GM12878 (cell line): ENCODE measurements at regions of chr9 and their contacts with region 1.

Region 1: GRCh38 chr9:37528652-37529510 is 43.1 kb downstream of the POLR1E start:
- DNase-seq: peak; percentile 40
- ATAC-seq: peak; percentile 86
- H3K4me3 ChIP-seq: no peak overlapping the region
- H3K27ac ChIP-seq: peak overlapping the region; percentile 58
- H3K4me1 ChIP-seq: peaks cover 26% of the 10 kb centered on the region
- H3K27me3 ChIP-seq: no peaks in the 10 kb centered on the region
- CTCF ChIP-seq: no peak
- EP300 ChIP-seq: peak in 1 of 2 experiments; percentile 67; a peak in 1 of 4 replicates
- POLR2A ChIP-seq: no peak
- RAD21 ChIP-seq: no peak

Region 2: DNA sequence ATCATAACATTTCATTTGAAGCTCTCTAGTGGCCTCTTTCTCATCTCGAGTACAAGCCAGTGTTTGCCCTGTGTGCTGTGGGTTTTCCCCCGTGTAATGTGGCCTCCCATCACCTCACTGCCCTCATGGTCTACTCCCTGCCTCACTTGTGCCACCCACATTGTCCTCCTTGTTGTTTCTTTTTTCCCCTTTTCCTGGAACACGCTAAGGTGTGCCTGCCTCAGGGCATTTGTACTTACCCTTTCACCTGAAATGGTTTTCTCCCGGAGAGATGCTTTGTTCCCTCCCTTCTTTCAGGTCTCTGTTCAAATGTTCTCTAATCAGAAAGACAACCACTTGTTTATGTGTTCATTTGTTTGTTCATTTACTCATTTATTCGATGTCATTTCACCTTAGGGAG is 915.9 kb before region 1 on chr9:
- CTCF ChIA-PET with region 1: no interaction called
- POLR2A ChIA-PET with region 1: no interaction called
- RAD21 ChIA-PET with region 1: no interaction called
- SMC1A ChIA-PET with region 1: no interaction called
- in situ Hi-C with region 1: no loop called
- intact Hi-C with region 1: no loop called
- DNase-seq: no peak
- ATAC-seq: peak; percentile 43; the same call in 1 of the 3 replicates
- H3K4me3 ChIP-seq: no peak overlapping the region
- H3K27ac ChIP-seq: no peak overlapping the region
- H3K4me1 ChIP-seq: no peaks in the 10 kb centered on the region
- H3K27me3 ChIP-seq: no peaks in the 10 kb centered on the region
- CTCF ChIP-seq: no peak
- EP300 ChIP-seq: no peak
- POLR2A ChIP-seq: no peak
- RAD21 ChIP-seq: no peak

Region 3: DNA sequence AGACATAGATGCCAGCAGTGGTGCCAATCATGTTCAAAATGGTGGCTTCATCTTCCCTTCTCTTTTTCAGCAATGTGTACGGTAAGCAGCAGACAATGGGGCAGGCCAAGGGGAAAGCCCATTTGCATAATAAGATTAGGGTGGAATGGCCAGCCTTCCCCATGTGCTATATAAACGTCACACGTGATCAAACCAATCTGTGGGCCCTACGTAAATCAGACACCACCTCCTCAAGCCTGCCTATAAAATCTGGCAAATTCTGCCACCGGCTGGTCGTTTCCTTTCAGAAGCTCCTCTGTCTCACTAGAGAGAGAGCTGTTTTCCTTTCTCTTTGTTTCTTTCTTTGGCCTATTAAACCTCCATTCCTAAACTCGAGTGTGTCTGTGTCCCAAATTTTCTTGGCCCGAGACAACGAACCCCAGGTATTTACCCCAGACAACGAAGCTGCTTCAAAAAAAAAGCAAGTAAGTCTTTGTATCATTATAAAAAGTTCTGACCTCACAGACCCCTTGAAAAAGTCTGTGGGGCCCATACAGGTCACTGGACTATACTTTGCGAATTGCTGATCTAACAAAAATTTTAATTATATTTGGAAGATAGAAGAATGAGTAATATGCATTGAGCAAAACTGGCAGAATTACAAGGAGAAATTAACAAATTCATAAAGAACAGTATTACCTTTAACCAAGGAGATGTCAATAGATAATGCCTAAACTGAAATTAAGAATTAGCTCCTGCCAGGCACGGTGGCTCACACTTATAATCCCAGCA is 78.8 kb before region 1 on chr9:
- CTCF ChIA-PET with region 1: no interaction called
- POLR2A ChIA-PET with region 1: no interaction called
- RAD21 ChIA-PET with region 1: no interaction called
- SMC1A ChIA-PET with region 1: no interaction called
- in situ Hi-C with region 1: no loop called
- intact Hi-C with region 1: no loop called
- DNase-seq: no peak
- ATAC-seq: no peak
- H3K4me3 ChIP-seq: no peak overlapping the region
- H3K27ac ChIP-seq: no peak overlapping the region
- H3K4me1 ChIP-seq: no peaks in the 10 kb centered on the region; the same call in 1 of the 2 replicates
- H3K27me3 ChIP-seq: no peaks in the 10 kb centered on the region
- CTCF ChIP-seq: no peak
- EP300 ChIP-seq: no peak
- POLR2A ChIP-seq: no peak
- RAD21 ChIP-seq: no peak

Region 4: GRCh38 chr9:37511016-37512010 is 17.6 kb before region 1 on chr9:
- CTCF ChIA-PET with region 1: interaction called, 3 read pairs
- POLR2A ChIA-PET with region 1: no interaction called
- RAD21 ChIA-PET with region 1: no interaction called
- SMC1A ChIA-PET with region 1: no interaction called
- in situ Hi-C with region 1: no loop called
- intact Hi-C with region 1: loop called (anchors 2 kb)
- DNase-seq: no peak
- ATAC-seq: peak; percentile 90
- H3K4me3 ChIP-seq: no peak overlapping the region
- H3K27ac ChIP-seq: no peak overlapping the region
- H3K4me1 ChIP-seq: no peaks in the 10 kb centered on the region
- H3K27me3 ChIP-seq: no peaks in the 10 kb centered on the region
- CTCF ChIP-seq: peak; percentile 26 to 44 (median 35); a peak in 4 of 6 replicates
- EP300 ChIP-seq: no peak
- POLR2A ChIP-seq: peak; percentile 58; the same call in 1 of the 2 replicates
- RAD21 ChIP-seq: 0 out of 2 replicates have a peak, but pooled peaks have one; percentile 27

Region 5: GRCh38 chr9:37565661-37566618 is 37.1 kb after region 1 on chr9:
- CTCF ChIA-PET with region 1: no interaction called
- POLR2A ChIA-PET with region 1: interaction called, 4 read pairs
- RAD21 ChIA-PET with region 1: interaction called, 6 read pairs
- SMC1A ChIA-PET with region 1: interaction called, 4 read pairs
- in situ Hi-C with region 1: no loop called
- intact Hi-C with region 1: loop called (anchors 5 kb)
- DNase-seq: peak; percentile 77
- ATAC-seq: peak; percentile 84
- H3K4me3 ChIP-seq: peak overlapping the region; percentile 57
- H3K27ac ChIP-seq: peak overlapping the region; percentile 95
- H3K4me1 ChIP-seq: peaks cover 53% of the 10 kb centered on the region
- H3K27me3 ChIP-seq: no peaks in the 10 kb centered on the region
- CTCF ChIP-seq: no peak
- EP300 ChIP-seq: no peak
- POLR2A ChIP-seq: peak; percentile 54
- RAD21 ChIP-seq: no peak

Region 6: GRCh38 chr9:37575921-37576721 is 47.2 kb after region 1 on chr9 and contains the start of gene FBXO10:
- CTCF ChIA-PET with region 1: interaction called, 3 read pairs
- POLR2A ChIA-PET with region 1: interaction called, 11 read pairs
- RAD21 ChIA-PET with region 1: no interaction called
- SMC1A ChIA-PET with region 1: interaction called, 7 read pairs
- in situ Hi-C with region 1: no loop called
- intact Hi-C with region 1: no loop called
- DNase-seq: no peak
- ATAC-seq: peak; percentile 87
- H3K4me3 ChIP-seq: peak within 1 kb of the TSS; percentile 89
- H3K27ac ChIP-seq: peak within 1 kb of the TSS; percentile 78
- H3K4me1 ChIP-seq: peaks cover 5% of the 10 kb centered on the region
- H3K27me3 ChIP-seq: no peaks in the 10 kb centered on the region
- CTCF ChIP-seq: no peak
- EP300 ChIP-seq: 0 out of 4 replicates have a peak, but pooled peaks of 1 of the 2 experiments have one; percentile 6
- POLR2A ChIP-seq: peak; percentile 74
- RAD21 ChIP-seq: 0 out of 2 replicates have a peak, but pooled peaks have one; percentile 6
- polyA plus RNA-seq, gene FBXO10: 1.6 to 1.9 TPM

Region 7: DNA sequence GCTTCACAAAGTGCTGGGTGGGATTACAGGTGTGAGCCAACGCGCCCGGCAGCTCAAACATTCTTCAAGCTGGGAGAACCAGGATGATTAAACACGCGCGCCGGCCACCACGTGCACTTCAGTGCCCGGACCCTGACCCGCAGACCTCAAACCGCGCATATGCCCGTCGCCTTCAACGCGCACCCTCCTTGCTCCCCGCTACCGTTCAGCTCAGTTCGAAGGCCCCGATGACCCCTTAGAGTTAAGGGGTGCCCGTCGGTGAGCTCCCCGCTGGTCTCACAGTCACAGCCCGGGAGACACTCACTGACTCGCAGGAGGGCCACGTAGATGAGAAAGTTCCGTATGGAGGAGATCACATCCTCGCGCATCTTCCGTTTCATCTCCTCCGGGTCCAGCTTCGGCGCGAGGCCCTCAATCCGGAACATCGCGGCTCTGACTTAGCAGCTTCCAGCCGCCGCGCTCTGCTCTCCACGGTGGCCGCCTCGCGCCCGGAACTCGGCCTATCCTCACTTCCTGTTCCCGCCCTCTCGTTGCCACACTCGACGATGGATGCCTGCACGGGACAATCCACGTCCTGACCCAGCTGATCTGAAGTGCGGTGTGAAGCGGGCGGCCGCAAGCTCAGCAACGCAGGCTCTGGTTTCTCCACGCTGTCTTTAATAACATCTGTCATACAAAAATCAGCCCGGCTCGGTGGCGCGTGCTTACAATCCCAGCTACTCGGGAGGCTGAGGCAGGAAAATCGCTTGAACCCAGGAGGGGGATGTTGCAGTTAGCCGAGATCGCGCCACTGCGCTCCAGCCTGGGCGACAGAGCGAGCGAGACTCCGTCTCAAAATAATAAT is 63.4 kb after region 1 on chr9 and contains the start of gene TOMM5:
- CTCF ChIA-PET with region 1: interaction called, 3 read pairs
- POLR2A ChIA-PET with region 1: interaction called, 3 read pairs
- RAD21 ChIA-PET with region 1: interaction called, 6 read pairs
- SMC1A ChIA-PET with region 1: interaction called, 3 read pairs
- in situ Hi-C with region 1: no loop called
- intact Hi-C with region 1: loop called (anchors 5 kb)
- DNase-seq: peak; percentile 76
- ATAC-seq: peak; percentile 92
- H3K4me3 ChIP-seq: peak within 1 kb of the TSS; percentile 73
- H3K27ac ChIP-seq: peak within 1 kb of the TSS; percentile 94
- H3K4me1 ChIP-seq: peaks cover 8% of the 10 kb centered on the region
- H3K27me3 ChIP-seq: no peaks in the 10 kb centered on the region
- CTCF ChIP-seq: no peak
- EP300 ChIP-seq: no peak
- POLR2A ChIP-seq: peak; percentile 99
- RAD21 ChIP-seq: no peak
- polyA plus RNA-seq, gene TOMM5: 1,100 to 1,143 TPM